H1 (cell line): ENCODE measurements at regions of chr5 and their contacts with region 1.

Region 1: DNA sequence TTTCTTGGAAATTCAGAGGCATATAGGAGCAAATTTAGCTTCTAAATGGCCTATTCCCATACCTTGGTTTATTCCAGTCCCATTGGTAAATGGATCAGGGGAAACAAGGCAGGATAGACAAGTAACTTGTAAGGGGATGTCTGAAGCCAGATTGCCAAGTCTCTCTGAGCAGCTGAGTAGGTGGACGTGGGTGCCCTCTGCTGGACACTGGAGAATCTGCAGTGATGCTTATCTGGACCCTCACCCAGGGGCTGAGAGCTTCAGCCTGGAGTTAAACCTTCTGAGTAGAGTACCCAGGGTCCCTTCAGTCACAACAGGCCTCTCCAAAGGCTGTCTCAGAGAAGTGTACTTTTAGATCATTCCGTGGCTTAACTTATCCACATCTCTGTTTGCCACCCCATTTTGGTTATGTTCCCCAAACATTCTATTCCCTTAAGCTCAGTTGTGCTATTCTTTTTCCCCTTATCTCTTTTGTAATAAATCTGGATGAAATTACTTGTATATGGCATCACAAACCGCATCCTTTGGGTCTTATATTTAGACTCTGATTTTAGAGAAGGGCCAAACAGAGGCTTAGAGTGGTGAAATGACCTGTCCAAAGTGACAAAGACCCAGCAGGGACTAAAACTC is 218.3 kb upstream of the GLRA1 start:
- DNase-seq: peak; percentile 61 to 86
- H3K4me3 ChIP-seq: no peak overlapping the region
- H3K27ac ChIP-seq: no peak overlapping the region
- H3K4me1 ChIP-seq: no peaks in the 10 kb centered on the region; a peak in 1 of 7 replicates
- H3K27me3 ChIP-seq: no peaks in the 10 kb centered on the region
- CTCF ChIP-seq: peak; percentile 89 to 93 (median 90)
- EP300 ChIP-seq: no peak
- POLR2A ChIP-seq: no peak
- RAD21 ChIP-seq: peak; percentile 97 to 98

Region 2: DNA sequence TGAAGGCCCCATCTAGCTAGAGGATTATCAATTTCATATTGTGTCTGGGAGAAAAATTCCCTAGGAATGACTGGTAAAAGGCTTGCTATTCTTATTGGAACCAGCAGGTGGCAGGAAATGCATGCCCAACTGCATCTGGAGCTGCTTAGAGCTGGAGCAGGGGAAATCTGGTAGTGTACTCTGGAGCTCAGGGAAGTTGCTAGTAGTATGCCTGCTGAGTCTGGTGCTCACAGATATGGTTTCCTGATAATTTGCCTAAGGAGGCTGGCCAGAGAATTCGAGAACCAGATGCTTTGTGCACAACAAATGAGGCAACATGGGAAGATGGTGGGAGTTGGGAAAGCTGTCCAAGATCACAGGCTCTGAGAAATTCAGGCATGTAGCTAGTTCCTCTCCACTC is 317.5 kb before region 1 on chr5:
- CTCF ChIA-PET with region 1: interaction called, 193 read pairs
- POLR2A ChIA-PET with region 1: no interaction called
- DNase-seq: peak; percentile 13 to 72
- H3K4me3 ChIP-seq: no peak overlapping the region
- H3K27ac ChIP-seq: no peak overlapping the region
- H3K4me1 ChIP-seq: peaks cover 0 to 4% (median 1%) of the 10 kb centered on the region in 4 experiments; a peak in 3 of 7 replicates
- H3K27me3 ChIP-seq: no peaks in the 10 kb centered on the region
- CTCF ChIP-seq: peak; percentile 52 to 91 (median 82)
- EP300 ChIP-seq: no peak
- POLR2A ChIP-seq: no peak
- RAD21 ChIP-seq: peak; percentile 99 to 100

Region 3: DNA sequence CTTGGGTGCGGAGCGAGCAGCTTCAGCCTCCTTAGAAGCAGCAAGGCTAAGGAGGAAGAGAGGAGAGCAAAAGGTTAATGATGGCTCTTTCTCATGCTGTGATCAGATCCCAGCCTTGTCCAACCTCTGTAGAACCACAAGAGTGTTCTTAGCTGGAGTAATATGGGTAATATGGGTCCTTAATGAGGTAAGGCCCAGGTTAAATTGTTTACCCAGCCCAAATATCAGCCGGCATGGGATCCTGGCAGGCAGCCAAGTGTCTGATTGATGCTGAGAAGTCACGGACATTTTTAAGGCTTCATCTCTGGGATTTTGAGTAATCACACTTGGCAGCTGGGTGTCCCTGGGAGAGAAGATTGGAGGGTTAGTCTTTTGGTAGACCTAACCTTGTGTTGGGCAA is 250.6 kb before region 1 on chr5:
- CTCF ChIA-PET with region 1: interaction called, 34 read pairs
- POLR2A ChIA-PET with region 1: no interaction called
- DNase-seq: no peak
- H3K4me3 ChIP-seq: no peak overlapping the region
- H3K27ac ChIP-seq: no peak overlapping the region
- H3K4me1 ChIP-seq: peaks cover 0 to 6% (median 0%) of the 10 kb centered on the region in 4 experiments; a peak in 2 of 7 replicates
- H3K27me3 ChIP-seq: peaks cover 0 to 3% (median 0%) of the 10 kb centered on the region in 4 experiments; a peak in 2 of 7 replicates
- CTCF ChIP-seq: no peak
- EP300 ChIP-seq: no peak
- POLR2A ChIP-seq: no peak
- RAD21 ChIP-seq: no peak

Region 4: GRCh38 chr5:152051499-152052454 is 91.2 kb before region 1 on chr5:
- CTCF ChIA-PET with region 1: interaction called, 11 read pairs
- POLR2A ChIA-PET with region 1: no interaction called
- DNase-seq: peak in 1 of 2 experiments; percentile 38
- H3K4me3 ChIP-seq: no peak overlapping the region
- H3K27ac ChIP-seq: no peak overlapping the region
- H3K4me1 ChIP-seq: peaks cover 3 to 7% (median 3%) of the 10 kb centered on the region in 4 experiments; a peak in 5 of 7 replicates
- H3K27me3 ChIP-seq: no peaks in the 10 kb centered on the region
- CTCF ChIP-seq: no peak
- EP300 ChIP-seq: no peak
- POLR2A ChIP-seq: no peak
- RAD21 ChIP-seq: no peak

Region 5: GRCh38 chr5:152102057-152102456 is 40.9 kb before region 1 on chr5:
- CTCF ChIA-PET with region 1: no interaction called
- POLR2A ChIA-PET with region 1: no interaction called
- DNase-seq: no peak
- H3K4me3 ChIP-seq: no peak overlapping the region
- H3K27ac ChIP-seq: no peak overlapping the region
- H3K4me1 ChIP-seq: peaks cover 0 to under 1% (median under 1%) of the 10 kb centered on the region in 4 experiments; a peak in 1 of 7 replicates
- H3K27me3 ChIP-seq: no peaks in the 10 kb centered on the region
- CTCF ChIP-seq: no peak
- EP300 ChIP-seq: no peak
- POLR2A ChIP-seq: no peak
- RAD21 ChIP-seq: no peak

Region 6: GRCh38 chr5:152164860-152165259 is 21.9 kb after region 1 on chr5:
- CTCF ChIA-PET with region 1: interaction called, 27 read pairs
- POLR2A ChIA-PET with region 1: no interaction called
- DNase-seq: no peak
- H3K4me3 ChIP-seq: no peak overlapping the region
- H3K27ac ChIP-seq: no peak overlapping the region
- H3K4me1 ChIP-seq: peaks cover 0 to 2% (median under 1%) of the 10 kb centered on the region in 4 experiments; a peak in 1 of 7 replicates
- H3K27me3 ChIP-seq: peaks cover 0 to 1% (median 0%) of the 10 kb centered on the region in 4 experiments; a peak in 1 of 7 replicates
- CTCF ChIP-seq: peak; percentile 53 to 66 (median 64)
- EP300 ChIP-seq: no peak
- POLR2A ChIP-seq: no peak
- RAD21 ChIP-seq: peak; percentile 69 to 76

Region 7: DNA sequence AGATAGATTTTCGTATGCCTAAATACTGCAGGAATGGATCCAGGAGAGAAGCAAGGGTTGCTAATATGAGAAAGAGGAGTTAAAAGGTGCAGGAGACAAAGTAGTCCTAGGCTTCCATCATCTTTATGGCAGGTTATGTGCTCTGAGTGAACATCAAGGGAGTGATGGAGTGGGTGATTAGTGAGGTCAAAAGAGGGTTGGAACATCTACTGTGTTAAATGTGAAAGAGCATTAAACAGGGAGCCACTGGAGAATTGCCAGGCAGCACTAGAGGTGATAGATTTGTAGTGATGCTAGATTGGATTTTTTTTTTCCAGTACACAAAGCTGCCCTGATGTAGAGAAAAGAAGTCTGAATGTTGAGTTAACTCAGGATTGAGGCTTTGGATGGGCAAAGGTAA is 62.8 kb after region 1 on chr5:
- CTCF ChIA-PET with region 1: no interaction called
- POLR2A ChIA-PET with region 1: no interaction called
- DNase-seq: no peak
- H3K4me3 ChIP-seq: no peak overlapping the region
- H3K27ac ChIP-seq: no peak overlapping the region
- H3K4me1 ChIP-seq: no peaks in the 10 kb centered on the region
- H3K27me3 ChIP-seq: no peaks in the 10 kb centered on the region
- CTCF ChIP-seq: no peak
- EP300 ChIP-seq: no peak
- POLR2A ChIP-seq: no peak
- RAD21 ChIP-seq: no peak

Region 8: DNA sequence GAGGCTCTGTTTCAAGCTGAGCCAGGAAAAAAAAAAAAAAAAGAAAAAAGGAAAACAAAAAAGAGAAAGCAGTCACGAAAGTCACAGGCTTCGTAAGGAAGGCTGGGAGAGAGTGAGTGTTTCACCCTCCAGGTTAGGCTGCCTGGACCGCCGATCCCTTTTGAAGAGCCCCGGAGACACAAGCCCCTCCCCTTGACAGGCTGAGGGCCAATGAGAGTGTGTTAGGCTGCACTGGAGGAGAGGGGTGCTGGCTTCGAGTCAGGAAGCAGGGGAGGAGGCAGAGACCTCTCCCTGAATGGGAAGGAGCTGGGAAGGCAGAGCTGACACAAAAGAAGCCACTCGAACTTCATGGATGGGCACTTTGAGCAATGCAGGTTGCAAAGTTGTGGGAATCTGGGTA is 262.2 kb after region 1 on chr5 and contains the start of gene NMUR2:
- CTCF ChIA-PET with region 1: no interaction called
- POLR2A ChIA-PET with region 1: no interaction called
- DNase-seq: peak; percentile 31 to 57
- H3K4me3 ChIP-seq: no peak within 1 kb of the TSS
- H3K27ac ChIP-seq: no peak within 1 kb of the TSS
- H3K4me1 ChIP-seq: 0 out of 7 replicates have a peak, but pooled peaks cover 0 to 2% (median 0%) of the 10 kb centered on the region in 4 experiments
- H3K27me3 ChIP-seq: no peaks in the 10 kb centered on the region
- CTCF ChIP-seq: no peak
- EP300 ChIP-seq: no peak
- POLR2A ChIP-seq: no peak
- RAD21 ChIP-seq: no peak
- total RNA-seq, gene NMUR2: not detected in 2 replicates

Region 9: DNA sequence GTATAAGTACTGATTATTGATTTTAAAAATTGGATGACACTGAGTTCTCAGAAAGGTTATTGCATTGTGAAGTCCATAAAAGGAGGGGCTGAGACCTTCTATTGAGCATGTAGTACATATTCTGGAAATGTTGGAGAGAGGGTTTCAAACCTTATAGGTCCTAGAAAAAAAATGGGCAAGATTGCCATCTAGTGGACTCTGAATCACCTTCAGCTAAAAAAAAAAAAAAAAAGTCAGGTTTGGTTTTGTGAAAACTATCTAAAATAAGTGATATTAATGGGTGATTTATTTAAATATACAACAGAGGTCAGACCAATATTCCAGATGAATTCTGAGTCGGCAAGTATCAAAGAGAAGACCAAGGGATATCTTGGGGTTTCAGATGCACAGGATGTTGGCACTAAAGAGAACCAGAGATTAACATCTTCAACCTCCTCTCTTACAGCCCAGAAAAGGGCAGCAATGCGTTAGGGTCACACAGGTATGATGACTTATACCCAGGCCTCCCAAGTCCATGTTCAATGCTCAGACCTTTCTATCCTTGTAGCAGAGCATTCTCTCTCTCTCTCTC is 372.0 kb after region 1 on chr5:
- CTCF ChIA-PET with region 1: interaction called, 20 read pairs
- POLR2A ChIA-PET with region 1: no interaction called
- DNase-seq: no peak
- H3K4me3 ChIP-seq: no peak overlapping the region
- H3K27ac ChIP-seq: no peak overlapping the region
- H3K4me1 ChIP-seq: no peaks in the 10 kb centered on the region
- H3K27me3 ChIP-seq: no peaks in the 10 kb centered on the region
- CTCF ChIP-seq: peak in 2 of 3 experiments; percentile 19 to 32; a peak in 2 of 4 replicates
- EP300 ChIP-seq: no peak
- POLR2A ChIP-seq: no peak
- RAD21 ChIP-seq: peak; percentile 49 to 53